ENCODE measurements at regions of chr2 and their contacts with region 1.

Region 1: GRCh38 chr2:102498414-102498813 is 25.4 kb downstream of the SLC9A4 start:
- DNase-seq: peak; percentile 18
- ATAC-seq: peak; percentile 77
- H3K4me3 Mint-ChIP-seq: no peak overlapping the region
- H3K27ac Mint-ChIP-seq: no peak overlapping the region
- H3K4me1 Mint-ChIP-seq: peaks cover 7% of the 10 kb centered on the region
- H3K27me3 Mint-ChIP-seq: peaks cover 10% of the 10 kb centered on the region

Region 2: DNA sequence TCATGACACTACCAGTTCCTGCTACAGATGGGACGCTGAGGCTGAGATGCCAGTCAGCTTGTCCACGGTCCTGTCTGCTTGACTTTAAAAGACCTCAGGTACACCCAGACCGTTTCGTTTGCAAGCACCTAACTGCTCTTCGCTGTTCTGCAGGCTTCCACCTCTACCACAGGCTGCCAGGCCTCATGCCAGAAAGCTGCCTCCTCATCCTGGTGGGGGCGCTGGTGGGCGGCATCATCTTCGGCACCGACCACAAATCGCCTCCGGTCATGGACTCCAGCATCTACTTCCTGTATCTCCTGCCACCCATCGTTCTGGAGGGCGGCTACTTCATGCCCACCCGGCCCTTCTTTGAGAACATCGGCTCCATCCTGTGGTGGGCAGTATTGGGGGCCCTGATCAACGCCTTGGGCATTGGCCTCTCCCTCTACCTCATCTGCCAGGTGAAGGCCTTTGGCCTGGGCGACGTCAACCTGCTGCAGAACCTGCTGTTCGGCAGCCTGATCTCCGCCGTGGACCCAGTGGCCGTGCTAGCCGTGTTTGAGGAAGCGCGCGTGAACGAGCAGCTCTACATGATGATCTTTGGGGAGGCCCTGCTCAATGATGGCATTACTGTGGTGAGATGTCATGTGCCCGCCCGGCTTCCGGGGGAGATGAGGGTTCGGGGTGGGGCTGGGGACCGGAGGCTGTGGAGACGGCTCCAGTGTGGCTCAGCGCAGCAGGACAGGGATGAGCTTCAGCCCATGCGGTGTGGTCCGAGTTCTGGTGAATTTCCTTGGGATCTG is 19.5 kb before region 1 on chr2:
- CTCF ChIA-PET with region 1: interaction called, 5 read pairs
- POLR2A ChIA-PET with region 1: no interaction called
- intact Hi-C with region 1: loop called in 1 of 2 experiments (anchors 1 kb)
- DNase-seq: peak; percentile 16
- ATAC-seq: no peak
- H3K4me3 Mint-ChIP-seq: no peak overlapping the region
- H3K27ac Mint-ChIP-seq: no peak overlapping the region
- H3K4me1 Mint-ChIP-seq: peaks cover 16% of the 10 kb centered on the region
- H3K27me3 Mint-ChIP-seq: peaks cover 12% of the 10 kb centered on the region

Measured in activated CD4-positive, alpha-beta T cell treated with anti-CD3 and anti-CD28 coated beads for 36 hours (primary cell).